PC-3 (cell line): ENCODE measurements at regions of chr5 and their contacts with region 1.

Region 1: DNA sequence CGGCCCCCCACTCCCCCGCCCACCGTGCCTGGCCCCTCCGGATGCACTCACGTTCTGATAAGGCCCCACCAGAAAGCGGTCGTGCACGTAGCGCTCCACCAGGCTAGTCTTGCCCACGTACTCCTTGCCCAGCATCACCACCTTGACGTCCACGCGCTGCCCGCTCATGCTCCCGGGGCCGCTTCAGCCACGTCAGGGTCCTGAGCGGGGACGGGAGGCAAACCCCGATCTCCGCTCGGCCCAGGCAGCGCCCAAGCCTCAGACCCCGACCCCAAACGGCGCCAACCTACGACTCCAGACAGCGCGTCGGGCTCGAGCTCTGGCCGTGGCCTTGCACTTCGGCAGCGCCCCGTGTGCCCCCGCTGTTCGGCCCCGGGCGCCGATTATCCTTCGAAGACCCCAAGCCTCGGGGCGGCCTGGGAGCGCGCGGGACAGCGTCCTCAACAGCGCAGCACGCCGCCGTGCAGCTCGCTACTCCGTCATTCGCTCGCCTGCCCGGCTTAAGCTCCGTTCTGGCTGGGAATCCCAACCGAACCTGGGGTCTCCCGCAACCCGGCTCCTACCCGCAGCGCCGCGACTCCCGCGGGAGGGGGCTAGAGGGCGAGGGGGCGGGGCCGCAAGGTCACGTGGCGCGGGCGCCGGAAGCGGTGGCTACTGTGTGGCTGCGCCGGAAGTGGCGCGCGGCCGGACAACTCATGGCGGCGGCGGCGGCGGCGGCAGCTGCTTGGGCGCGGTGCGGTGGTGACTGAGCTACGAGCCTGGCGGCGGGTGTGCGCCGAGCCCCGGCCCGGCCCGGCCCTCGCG is at the starts of genes PRELID1 and RAB24:
- DNase-seq: peak; percentile 89
- ATAC-seq: peak; percentile 27
- H3K4me3 ChIP-seq: peak within 1 kb of the TSS; percentile 86
- H3K27ac ChIP-seq: peak within 1 kb of the TSS; percentile 92
- H3K4me1 ChIP-seq: peaks cover 53% of the 10 kb centered on the region
- H3K27me3 ChIP-seq: no peaks in the 10 kb centered on the region
- CTCF ChIP-seq: peak; percentile 46
- total RNA-seq, gene PRELID1: 496 and 505 TPM in 2 replicates
- total RNA-seq, gene RAB24: 40.3 and 41.1 TPM in 2 replicates

Region 2: GRCh38 chr5:177133091-177133852 is 170.1 kb before region 1 on chr5 and contains the start of gene NSD1:
- CTCF ChIA-PET with region 1: no interaction called
- POLR2A ChIA-PET with region 1: no interaction called
- intact Hi-C with region 1: loop called (anchors 5 kb)
- DNase-seq: peak; percentile 75
- ATAC-seq: peak; percentile 60
- H3K4me3 ChIP-seq: peak within 1 kb of the TSS; percentile 79
- H3K27ac ChIP-seq: peak within 1 kb of the TSS; percentile 35
- H3K4me1 ChIP-seq: peaks cover 31% of the 10 kb centered on the region
- H3K27me3 ChIP-seq: no peaks in the 10 kb centered on the region
- CTCF ChIP-seq: no peak
- total RNA-seq, gene NSD1: 48.9 and 70.5 TPM in 2 replicates

Region 3: GRCh38 chr5:177370488-177371119 is 67.3 kb after region 1 on chr5:
- CTCF ChIA-PET with region 1: no interaction called
- POLR2A ChIA-PET with region 1: no interaction called
- intact Hi-C with region 1: no loop called
- DNase-seq: peak; percentile 94
- ATAC-seq: peak; percentile 92
- H3K4me3 ChIP-seq: peak overlapping the region; percentile 74
- H3K27ac ChIP-seq: no peak overlapping the region
- H3K4me1 ChIP-seq: peaks cover 6% of the 10 kb centered on the region
- H3K27me3 ChIP-seq: no peaks in the 10 kb centered on the region
- CTCF ChIP-seq: peak; percentile 57